Mammary epithelial cell (primary cell): ENCODE measurements at regions of chr3 and their contacts with region 1.

Region 1: GRCh38 chr3:153043729-153044328 is 118.2 kb upstream of the RAP2B start:
- DNase-seq: peak; percentile 71
- H3K4me3 ChIP-seq: peak overlapping the region in 1 of 3 experiments; percentile 25
- H3K27ac ChIP-seq: peak overlapping the region; percentile 94
- H3K4me1 ChIP-seq: peaks cover 20% of the 10 kb centered on the region
- H3K27me3 ChIP-seq: no peaks in the 10 kb centered on the region
- CTCF ChIP-seq: no peak

Region 2: GRCh38 chr3:153138276-153139210 is 94.7 kb after region 1 on chr3:
- CTCF ChIA-PET with region 1: no interaction called
- dilution Hi-C with region 1: no loop called
- in situ Hi-C with region 1: no loop called
- intact Hi-C with region 1: loop called (anchors 2 kb)
- DNase-seq: peak; percentile 100
- H3K4me3 ChIP-seq: no peak overlapping the region
- H3K27ac ChIP-seq: peak overlapping the region; percentile 100
- H3K4me1 ChIP-seq: peaks cover 43% of the 10 kb centered on the region
- H3K27me3 ChIP-seq: no peaks in the 10 kb centered on the region
- CTCF ChIP-seq: no peak

Region 3: DNA sequence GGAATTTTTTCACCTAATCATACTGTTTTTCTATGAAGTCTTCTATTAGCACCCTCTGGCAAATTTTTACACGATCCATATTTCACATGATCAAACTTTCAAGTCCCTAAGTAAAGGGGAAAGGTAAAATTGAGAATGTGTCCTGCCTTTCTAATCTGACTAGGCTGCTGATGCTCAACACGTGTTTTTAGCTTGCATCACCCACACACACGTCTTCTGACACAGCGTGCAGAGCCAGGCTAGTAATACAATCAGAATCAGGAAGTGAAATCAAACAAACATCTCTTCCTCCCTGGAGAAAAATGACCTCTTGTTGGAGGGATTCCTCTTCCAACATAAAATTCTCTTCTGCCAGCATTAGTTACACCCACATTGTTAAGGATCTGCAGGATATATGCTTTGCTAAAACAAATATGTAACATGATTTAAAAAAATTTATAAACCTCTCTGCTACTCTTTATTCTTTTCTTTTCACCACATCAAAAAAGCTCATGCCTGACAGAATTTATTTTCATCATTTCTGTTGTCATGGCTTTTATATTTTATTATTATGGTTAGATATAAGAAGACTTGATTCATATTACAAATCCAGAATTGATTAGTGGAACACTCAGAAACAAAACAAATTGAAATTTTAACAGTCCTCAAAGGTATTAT is 240.6 kb after region 1 on chr3:
- CTCF ChIA-PET with region 1: no interaction called
- dilution Hi-C with region 1: no loop called
- in situ Hi-C with region 1: loop called (anchors 10 to 25 kb)
- intact Hi-C with region 1: no loop called
- DNase-seq: peak; percentile 81
- H3K4me3 ChIP-seq: no peak overlapping the region
- H3K27ac ChIP-seq: peak overlapping the region; percentile 97
- H3K4me1 ChIP-seq: peaks cover 42% of the 10 kb centered on the region
- H3K27me3 ChIP-seq: no peaks in the 10 kb centered on the region
- CTCF ChIP-seq: no peak

Region 4: GRCh38 chr3:153291056-153291685 is 247.3 kb after region 1 on chr3:
- CTCF ChIA-PET with region 1: interaction called, 9 read pairs
- dilution Hi-C with region 1: no loop called
- in situ Hi-C with region 1: loop called (anchors 10 to 25 kb)
- intact Hi-C with region 1: loop called (anchors 1 kb)
- DNase-seq: peak; percentile 31
- H3K4me3 ChIP-seq: no peak overlapping the region
- H3K27ac ChIP-seq: no peak overlapping the region
- H3K4me1 ChIP-seq: peaks cover 34% of the 10 kb centered on the region
- H3K27me3 ChIP-seq: no peaks in the 10 kb centered on the region
- CTCF ChIP-seq: peak; percentile 35 to 70

Region 5: GRCh38 chr3:153443961-153444360 is 400.1 kb after region 1 on chr3:
- CTCF ChIA-PET with region 1: interaction called, 3 read pairs
- dilution Hi-C with region 1: no loop called
- in situ Hi-C with region 1: no loop called
- intact Hi-C with region 1: loop called (anchors 2 kb)
- DNase-seq: no peak
- H3K4me3 ChIP-seq: no peak overlapping the region
- H3K27ac ChIP-seq: no peak overlapping the region
- H3K4me1 ChIP-seq: no peaks in the 10 kb centered on the region
- H3K27me3 ChIP-seq: no peaks in the 10 kb centered on the region
- CTCF ChIP-seq: peak in 1 of 2 donors; percentile 9

Region 6: GRCh38 chr3:153595186-153595815 is 551.5 kb after region 1 on chr3:
- CTCF ChIA-PET with region 1: no interaction called
- dilution Hi-C with region 1: no loop called
- in situ Hi-C with region 1: loop called in 1 of 2 experiments (anchors 10 kb)
- intact Hi-C with region 1: loop called (anchors 1 kb)
- DNase-seq: peak; percentile 45
- H3K4me3 ChIP-seq: no peak overlapping the region
- H3K27ac ChIP-seq: no peak overlapping the region
- H3K4me1 ChIP-seq: peaks cover 18% of the 10 kb centered on the region
- H3K27me3 ChIP-seq: no peaks in the 10 kb centered on the region
- CTCF ChIP-seq: peak; percentile 78 to 96